ENCODE measurements at regions of chr2 and their contacts with region 1.

Region 1: GRCh38 chr2:197931661-197932312 is 127.4 kb downstream of the PLCL1 start:
- DNase-seq: no peak
- H3K4me3 Mint-ChIP-seq: no peak overlapping the region
- H3K27ac Mint-ChIP-seq: no peak overlapping the region
- H3K4me1 Mint-ChIP-seq: peaks cover 39% of the 10 kb centered on the region
- H3K27me3 Mint-ChIP-seq: peaks cover 6% of the 10 kb centered on the region

Region 2: GRCh38 chr2:197838036-197838435 is 93.8 kb before region 1 on chr2:
- intact Hi-C with region 1: loop called (anchors 1 kb)
- DNase-seq: no peak
- H3K4me3 Mint-ChIP-seq: peak overlapping the region; percentile 53
- H3K27ac Mint-ChIP-seq: peak overlapping the region; percentile 68
- H3K4me1 Mint-ChIP-seq: peaks cover 44% of the 10 kb centered on the region
- H3K27me3 Mint-ChIP-seq: peaks cover 4% of the 10 kb centered on the region

Region 3: DNA sequence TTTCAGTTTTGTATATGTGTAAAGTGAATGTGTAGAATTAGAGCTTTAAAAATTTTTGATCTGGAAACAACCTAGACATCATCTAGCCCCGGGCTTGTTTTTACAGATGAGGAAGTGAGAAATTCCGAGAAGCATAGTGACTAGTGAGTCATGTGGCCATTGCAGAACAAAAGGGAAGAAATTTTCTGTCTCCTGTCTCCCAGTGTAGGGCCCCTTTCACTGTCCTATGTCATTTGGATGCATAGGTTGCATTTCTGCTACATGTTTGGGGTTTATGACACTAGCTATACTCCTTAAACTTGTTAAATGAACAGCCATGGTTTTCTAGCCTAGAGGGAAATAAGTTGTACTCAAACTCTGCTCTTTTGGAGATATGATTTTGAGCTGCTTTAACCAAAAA is 42.7 kb before region 1 on chr2:
- intact Hi-C with region 1: loop called (anchors 2 kb)
- DNase-seq: no peak
- H3K4me3 Mint-ChIP-seq: no peak overlapping the region
- H3K27ac Mint-ChIP-seq: peak overlapping the region; percentile 77
- H3K4me1 Mint-ChIP-seq: peaks cover 37% of the 10 kb centered on the region
- H3K27me3 Mint-ChIP-seq: no peaks in the 10 kb centered on the region

Region 4: GRCh38 chr2:197952540-197953202 is 20.9 kb after region 1 on chr2:
- intact Hi-C with region 1: loop called (anchors 1 kb)
- DNase-seq: no peak
- H3K4me3 Mint-ChIP-seq: no peak overlapping the region
- H3K27ac Mint-ChIP-seq: no peak overlapping the region
- H3K4me1 Mint-ChIP-seq: peaks cover 20% of the 10 kb centered on the region
- H3K27me3 Mint-ChIP-seq: peaks cover 7% of the 10 kb centered on the region

Region 5: GRCh38 chr2:198004921-198005829 is 73.4 kb after region 1 on chr2:
- intact Hi-C with region 1: loop called (anchors 2 kb)
- DNase-seq: no peak
- H3K4me3 Mint-ChIP-seq: peak overlapping the region; percentile 20
- H3K27ac Mint-ChIP-seq: peak overlapping the region; percentile 79
- H3K4me1 Mint-ChIP-seq: peaks cover 49% of the 10 kb centered on the region
- H3K27me3 Mint-ChIP-seq: no peaks in the 10 kb centered on the region